Calu3 (cell line): ENCODE measurements at regions of chr5 and their contacts with region 1.

Region 1: GRCh38 chr5:83718195-83718825 is 2.3 kb downstream of the HAPLN1 start:
- DNase-seq: peak; percentile 69
- H3K4me3 Mint-ChIP-seq: no peak overlapping the region
- H3K27ac Mint-ChIP-seq: no peak overlapping the region
- H3K4me1 Mint-ChIP-seq: peaks cover 25% of the 10 kb centered on the region
- H3K27me3 Mint-ChIP-seq: peaks cover 13% of the 10 kb centered on the region
- CTCF ChIP-seq: peak; percentile 91

Region 2: GRCh38 chr5:82351754-82352145 is 1366.6 kb before region 1 on chr5:
- CTCF ChIA-PET with region 1: no interaction called
- intact Hi-C with region 1: loop called (anchors 5 kb)
- DNase-seq: peak; percentile 29
- H3K4me3 Mint-ChIP-seq: no peak overlapping the region
- H3K27ac Mint-ChIP-seq: peak overlapping the region; percentile 8
- H3K4me1 Mint-ChIP-seq: peaks cover 22% of the 10 kb centered on the region
- H3K27me3 Mint-ChIP-seq: no peaks in the 10 kb centered on the region
- CTCF ChIP-seq: peak; percentile 54

Region 3: GRCh38 chr5:83538786-83539462 is 179.4 kb before region 1 on chr5:
- CTCF ChIA-PET with region 1: no interaction called
- intact Hi-C with region 1: no loop called
- DNase-seq: no peak
- H3K4me3 Mint-ChIP-seq: no peak overlapping the region
- H3K27ac Mint-ChIP-seq: no peak overlapping the region
- H3K4me1 Mint-ChIP-seq: no peaks in the 10 kb centered on the region
- H3K27me3 Mint-ChIP-seq: no peaks in the 10 kb centered on the region
- CTCF ChIP-seq: no peak

Region 4: DNA sequence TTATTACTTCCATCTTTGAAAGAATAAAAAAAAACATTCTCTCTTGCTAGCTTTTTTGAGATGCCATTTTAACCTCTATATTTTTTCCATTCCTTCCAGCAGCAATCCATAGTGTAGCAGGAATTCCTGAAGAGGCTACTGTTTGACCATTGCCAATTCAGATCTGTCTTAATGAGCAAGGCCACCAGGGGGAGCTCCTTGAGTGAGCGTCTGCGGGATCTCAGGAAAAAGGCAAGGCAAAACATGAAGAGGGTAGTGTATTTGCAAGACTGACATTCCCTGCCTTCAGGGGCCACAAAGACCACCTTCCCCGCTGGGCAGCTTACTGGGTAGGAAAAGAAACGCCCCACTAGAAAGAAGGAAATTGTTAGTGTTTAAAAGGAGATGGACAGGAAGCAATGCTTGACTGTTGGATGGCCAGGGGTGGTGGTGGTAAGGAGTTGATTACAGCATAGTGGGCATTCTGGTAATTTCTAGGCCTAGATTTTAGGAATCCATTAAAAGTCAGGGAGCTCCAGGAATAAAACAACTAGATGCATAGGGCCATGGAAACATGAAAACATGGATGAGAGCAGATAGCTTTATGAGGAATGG is 208.9 kb after region 1 on chr5:
- CTCF ChIA-PET with region 1: interaction called, 3 read pairs
- intact Hi-C with region 1: loop called (anchors 1 kb)
- DNase-seq: peak; percentile 87
- H3K4me3 Mint-ChIP-seq: no peak overlapping the region
- H3K27ac Mint-ChIP-seq: no peak overlapping the region
- H3K4me1 Mint-ChIP-seq: peaks cover 40% of the 10 kb centered on the region
- H3K27me3 Mint-ChIP-seq: no peaks in the 10 kb centered on the region
- CTCF ChIP-seq: peak; percentile 93

Region 5: GRCh38 chr5:84191281-84191680 is 473.0 kb after region 1 on chr5:
- CTCF ChIA-PET with region 1: interaction called, 10 read pairs
- intact Hi-C with region 1: no loop called
- DNase-seq: no peak
- H3K4me3 Mint-ChIP-seq: no peak overlapping the region
- H3K27ac Mint-ChIP-seq: no peak overlapping the region
- H3K4me1 Mint-ChIP-seq: no peaks in the 10 kb centered on the region
- H3K27me3 Mint-ChIP-seq: no peaks in the 10 kb centered on the region
- CTCF ChIP-seq: no peak

Region 6: GRCh38 chr5:84379749-84380148 is 661.4 kb after region 1 on chr5:
- CTCF ChIA-PET with region 1: no interaction called
- intact Hi-C with region 1: loop called (anchors 5 kb)
- DNase-seq: no peak
- H3K4me3 Mint-ChIP-seq: no peak overlapping the region
- H3K27ac Mint-ChIP-seq: no peak overlapping the region
- H3K4me1 Mint-ChIP-seq: peaks cover 8% of the 10 kb centered on the region
- H3K27me3 Mint-ChIP-seq: no peaks in the 10 kb centered on the region
- CTCF ChIP-seq: no peak

Region 7: DNA sequence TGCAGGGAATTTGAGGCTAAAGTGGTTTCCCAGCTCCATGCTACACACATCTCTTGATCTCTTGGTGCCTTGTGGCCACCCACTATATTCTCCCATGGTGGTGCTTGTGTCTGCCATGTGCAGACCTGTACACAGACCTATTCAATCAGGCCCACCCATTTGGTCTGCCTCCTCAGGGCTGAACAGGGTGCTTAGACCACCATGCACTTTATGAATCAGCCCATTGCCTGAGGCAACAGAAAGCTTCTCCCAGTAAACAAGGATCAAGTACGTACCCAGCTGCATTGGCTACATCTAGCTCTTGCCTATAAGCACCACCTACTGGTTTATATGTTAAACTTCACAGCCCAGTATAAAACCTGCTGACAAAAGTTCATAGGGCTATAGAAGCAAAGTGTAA is 1330.7 kb after region 1 on chr5:
- CTCF ChIA-PET with region 1: no interaction called
- intact Hi-C with region 1: loop called (anchors 5 kb)
- DNase-seq: peak; percentile 6
- H3K4me3 Mint-ChIP-seq: no peak overlapping the region
- H3K27ac Mint-ChIP-seq: no peak overlapping the region
- H3K4me1 Mint-ChIP-seq: no peaks in the 10 kb centered on the region
- H3K27me3 Mint-ChIP-seq: no peaks in the 10 kb centered on the region
- CTCF ChIP-seq: peak; percentile 39